OCI-LY7 (cell line): ENCODE measurements at regions of chr2 and their contacts with region 1.

Region 1: DNA sequence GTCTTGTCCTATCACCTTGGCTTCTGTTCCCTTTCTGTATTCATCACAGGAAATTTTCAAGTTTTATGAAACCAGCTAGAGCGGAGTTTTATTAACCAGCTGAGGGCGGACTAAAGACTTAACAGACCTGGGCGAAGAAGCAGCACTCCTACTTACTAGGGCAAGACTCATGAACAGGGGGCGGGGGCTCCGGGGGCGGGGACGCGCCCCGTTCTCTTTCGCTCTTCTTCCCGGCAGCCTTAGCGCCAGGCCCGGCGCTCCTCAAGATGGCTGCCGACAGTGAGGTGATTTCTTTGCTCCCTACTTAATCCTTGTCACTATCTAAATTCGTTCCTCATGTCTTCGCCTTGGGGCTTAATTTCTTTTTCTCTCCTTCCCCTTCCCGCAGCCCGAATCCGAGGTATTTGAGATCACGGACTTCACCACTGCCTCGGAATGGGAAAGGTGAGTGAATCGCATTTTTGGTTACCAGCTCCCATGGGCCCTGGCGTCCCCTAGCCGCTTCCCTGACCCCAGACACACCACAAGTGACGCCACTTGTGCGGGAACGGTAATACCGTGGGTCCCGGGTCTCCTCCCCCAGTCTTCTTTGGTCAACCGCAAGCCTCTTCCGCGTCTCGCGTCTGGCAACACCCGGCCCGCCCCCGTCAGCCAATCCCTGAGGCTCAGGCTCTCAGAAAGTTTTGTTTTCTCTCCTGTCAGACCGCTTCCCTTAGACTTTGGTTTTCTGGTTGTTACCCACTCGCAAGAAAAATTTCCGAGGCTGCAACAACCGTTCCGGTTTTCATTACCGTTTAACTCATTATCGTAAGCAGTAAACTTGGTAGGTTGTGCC is at the start of gene RAB3GAP1:
- DNase-seq: peak; percentile 86
- H3K4me3 ChIP-seq: peak within 1 kb of the TSS; percentile 92
- H3K27ac ChIP-seq: peak within 1 kb of the TSS; percentile 89
- H3K4me1 ChIP-seq: peaks cover 37% of the 10 kb centered on the region
- CTCF ChIP-seq: no peak; the same call in 1 of the 2 replicates
- total RNA-seq, gene RAB3GAP1: 40.2 and 49.2 TPM in 2 replicates

Region 2: DNA sequence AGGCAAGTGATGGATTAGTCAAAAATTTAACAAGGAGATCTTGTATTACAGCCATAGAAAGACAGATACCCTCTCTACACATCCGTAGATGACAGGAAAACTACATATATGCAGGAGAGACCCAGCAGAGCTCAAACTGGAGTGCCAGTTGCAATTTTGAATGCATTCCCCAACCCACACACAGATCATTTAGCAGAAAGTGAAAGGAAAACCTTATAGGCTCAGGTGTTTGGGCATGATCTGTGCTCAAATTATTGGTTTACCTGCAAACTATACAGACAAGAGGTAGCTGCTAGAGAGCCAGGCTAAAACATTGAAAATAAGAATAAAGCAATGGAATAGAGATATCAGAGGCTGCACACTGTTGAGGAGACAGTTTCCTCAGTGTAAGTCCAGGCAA is 51.6 kb after region 1 on chr2:
- CTCF ChIA-PET with region 1: no interaction called
- POLR2A ChIA-PET with region 1: no interaction called
- intact Hi-C with region 1: no loop called
- DNase-seq: no peak
- H3K4me3 ChIP-seq: no peak overlapping the region
- H3K27ac ChIP-seq: no peak overlapping the region
- H3K4me1 ChIP-seq: no peaks in the 10 kb centered on the region
- CTCF ChIP-seq: no peak

Region 3: GRCh38 chr2:135183822-135184221 is 131.6 kb after region 1 on chr2:
- CTCF ChIA-PET with region 1: no interaction called
- POLR2A ChIA-PET with region 1: no interaction called
- intact Hi-C with region 1: no loop called
- DNase-seq: no peak
- H3K4me3 ChIP-seq: no peak overlapping the region
- H3K27ac ChIP-seq: no peak overlapping the region
- H3K4me1 ChIP-seq: no peaks in the 10 kb centered on the region
- CTCF ChIP-seq: no peak

Region 4: GRCh38 chr2:135252805-135253458 is 200.7 kb after region 1 on chr2:
- CTCF ChIA-PET with region 1: no interaction called
- POLR2A ChIA-PET with region 1: no interaction called
- intact Hi-C with region 1: loop called (anchors 5 kb)
- DNase-seq: no peak
- H3K4me3 ChIP-seq: no peak overlapping the region
- H3K27ac ChIP-seq: no peak overlapping the region
- H3K4me1 ChIP-seq: peaks cover 43% of the 10 kb centered on the region
- CTCF ChIP-seq: no peak